ENCODE measurements at regions of chr1 and their contacts with region 1.

Region 1: DNA sequence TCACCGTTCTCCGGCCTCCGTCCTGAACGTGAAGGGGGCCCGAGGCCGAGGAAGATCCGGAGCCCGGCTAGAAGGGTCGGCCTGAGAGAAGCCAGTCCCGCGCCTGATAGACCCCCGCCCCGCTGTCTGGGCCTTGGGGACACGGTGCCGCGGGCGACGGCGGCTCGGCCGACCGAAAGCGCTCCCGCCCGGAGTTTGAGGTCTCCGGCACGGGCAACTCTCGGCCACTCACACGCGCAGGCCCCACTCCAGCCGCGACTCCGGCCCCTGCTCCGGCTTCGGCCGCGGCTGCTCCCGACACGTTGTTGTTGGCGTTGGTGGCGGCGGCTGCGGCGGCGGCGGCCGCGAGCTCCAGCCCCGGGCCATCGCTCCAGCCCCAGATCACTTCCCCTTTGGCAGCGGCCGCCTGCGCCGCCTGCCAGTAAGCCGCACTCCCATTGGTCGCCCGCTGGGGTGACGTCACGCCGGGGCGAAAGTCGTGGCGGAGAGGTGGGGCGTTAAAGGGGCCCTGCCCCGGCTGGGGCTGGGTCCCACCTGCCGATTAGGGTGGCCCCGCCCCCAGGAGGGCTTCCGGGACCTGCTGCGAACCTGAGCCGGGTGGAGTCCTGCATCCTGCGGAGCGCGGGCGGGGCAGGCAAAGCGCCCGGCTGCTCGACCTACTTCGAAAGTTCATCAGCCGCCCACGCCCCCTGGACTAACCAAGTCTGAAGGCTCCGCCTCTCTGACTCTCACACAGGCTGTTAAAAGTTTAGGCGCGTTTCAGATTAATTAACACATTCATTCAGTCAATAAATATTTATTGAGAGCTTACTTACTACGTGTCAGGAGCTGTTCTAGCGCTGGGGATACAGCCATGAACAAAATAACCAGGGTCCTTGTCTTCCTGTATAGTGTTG is at the start of gene EFCAB14:
- DNase-seq: peak; percentile 99
- H3K4me3 Mint-ChIP-seq: peak within 1 kb of the TSS; percentile 97
- H3K27ac Mint-ChIP-seq: peak within 1 kb of the TSS; percentile 94
- H3K4me1 Mint-ChIP-seq: peaks cover 41% of the 10 kb centered on the region
- H3K27me3 Mint-ChIP-seq: no peaks in the 10 kb centered on the region
- total RNA-seq, gene EFCAB14: 67.0 and 70.4 TPM in 2 replicates

Region 2: DNA sequence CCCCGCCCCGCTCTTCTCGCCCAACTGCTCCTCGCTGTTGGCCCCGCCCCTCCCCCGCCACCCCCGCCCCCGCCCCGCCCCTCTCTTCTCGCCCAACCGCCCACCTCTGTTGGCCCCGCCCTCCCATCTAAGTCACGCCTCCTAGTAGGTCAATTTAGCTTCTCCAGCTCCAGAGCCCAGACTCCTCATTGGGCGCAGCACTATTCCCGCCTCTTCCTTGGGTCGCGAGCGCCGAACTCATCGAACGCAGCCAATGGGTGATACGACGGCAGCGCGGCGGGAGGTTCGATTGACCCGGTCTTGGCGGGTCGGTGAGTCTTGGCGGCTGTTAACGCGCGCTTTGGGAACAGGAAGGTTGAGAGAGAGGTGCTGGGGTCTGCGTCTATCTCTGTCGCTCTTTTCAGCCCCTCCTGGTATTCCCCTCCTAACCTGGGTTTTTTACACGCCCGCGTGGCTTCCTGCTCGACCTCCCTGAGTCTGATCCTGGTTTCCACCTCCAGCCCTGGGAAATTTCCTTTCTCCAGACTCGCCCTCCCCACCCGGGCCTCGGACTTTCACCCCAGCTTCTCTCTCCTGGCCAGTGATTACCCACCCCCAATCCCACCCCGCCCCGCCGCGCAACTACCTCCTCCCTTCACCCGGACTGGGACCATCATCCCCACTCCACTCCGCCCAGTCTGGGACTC is 471.4 kb before region 1 on chr1 and contains the start of gene RAD54L:
- intact Hi-C with region 1: loop called (anchors 5 kb)
- DNase-seq: peak; percentile 95
- H3K4me3 Mint-ChIP-seq: peak within 1 kb of the TSS; percentile 97
- H3K27ac Mint-ChIP-seq: peak within 1 kb of the TSS; percentile 94
- H3K4me1 Mint-ChIP-seq: peaks cover 39% of the 10 kb centered on the region
- H3K27me3 Mint-ChIP-seq: no peaks in the 10 kb centered on the region
- total RNA-seq, gene RAD54L: 49.7 and 50.2 TPM in 2 replicates

Region 3: DNA sequence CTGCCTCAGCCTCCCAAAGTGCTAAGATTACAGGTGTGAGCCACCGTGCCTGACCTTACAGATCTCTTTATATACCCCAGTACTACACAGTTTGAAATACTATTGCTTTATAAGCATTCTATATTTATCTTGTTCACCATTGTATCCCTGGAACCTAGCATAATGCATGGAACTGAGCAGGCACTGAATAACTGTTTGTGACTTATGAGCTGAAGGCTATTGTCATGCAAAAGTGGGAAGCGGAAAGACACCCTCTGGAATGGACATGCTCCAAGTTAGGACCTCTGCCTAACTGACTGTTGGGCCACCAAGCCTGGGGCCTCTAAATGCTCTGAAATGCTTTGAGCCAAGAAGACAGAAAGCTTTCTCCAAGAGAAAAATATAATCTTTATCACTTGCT is 423.7 kb before region 1 on chr1:
- intact Hi-C with region 1: no loop called
- DNase-seq: no peak
- H3K4me3 Mint-ChIP-seq: no peak overlapping the region
- H3K27ac Mint-ChIP-seq: no peak overlapping the region
- H3K4me1 Mint-ChIP-seq: peaks cover 8% of the 10 kb centered on the region
- H3K27me3 Mint-ChIP-seq: no peaks in the 10 kb centered on the region

Region 4: DNA sequence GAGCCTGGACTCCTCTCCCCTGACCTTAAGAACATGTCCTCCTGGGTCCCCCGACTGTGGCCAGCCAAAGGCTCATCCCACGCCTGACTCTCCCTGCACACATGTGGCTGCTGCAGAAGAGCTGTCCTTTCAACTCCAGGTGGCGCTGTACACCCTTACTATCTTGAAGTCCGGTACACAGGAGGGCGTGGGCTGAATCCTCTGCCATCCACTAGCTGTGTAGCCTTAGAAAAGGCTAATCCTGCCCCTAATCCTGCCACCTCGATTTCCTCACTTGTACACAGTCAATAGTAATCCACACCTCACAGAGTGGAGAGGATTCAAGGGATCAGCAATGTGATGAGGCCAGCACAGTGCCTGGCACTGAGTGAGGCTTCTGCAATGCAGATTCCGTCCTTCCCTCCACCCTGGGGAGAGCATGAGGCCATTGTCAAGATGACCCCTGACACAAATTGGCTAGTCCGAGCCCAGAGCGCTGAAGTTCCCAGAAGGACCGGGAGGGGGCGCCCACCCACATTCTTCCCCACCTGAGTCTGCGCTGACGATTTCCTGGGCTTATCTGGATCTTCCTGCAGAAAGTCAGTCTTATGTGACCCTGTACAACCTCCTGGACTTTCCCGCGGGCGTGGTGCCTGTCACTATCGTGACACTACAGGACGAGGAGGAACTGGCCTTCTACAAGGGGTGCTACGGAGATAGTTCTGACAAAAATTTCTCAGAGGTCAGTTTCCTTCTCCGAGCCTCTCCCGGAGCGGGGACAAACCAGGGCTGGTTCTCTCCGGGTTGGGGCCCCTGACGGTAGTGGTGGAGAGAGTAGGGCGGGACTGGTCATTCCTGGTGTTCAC is 276.4 kb before region 1 on chr1:
- intact Hi-C with region 1: loop called (anchors 2 kb)
- DNase-seq: peak; percentile 56
- H3K4me3 Mint-ChIP-seq: peak overlapping the region; percentile 81
- H3K27ac Mint-ChIP-seq: peak overlapping the region; percentile 64
- H3K4me1 Mint-ChIP-seq: peaks cover 13% of the 10 kb centered on the region
- H3K27me3 Mint-ChIP-seq: peaks cover 38% of the 10 kb centered on the region

Region 5: GRCh38 chr1:46603858-46604549 is 115.0 kb before region 1 on chr1 and contains the start of gene MKNK1:
- intact Hi-C with region 1: loop called (anchors 1 kb)
- DNase-seq: peak; percentile 99
- H3K4me3 Mint-ChIP-seq: peak within 1 kb of the TSS; percentile 91
- H3K27ac Mint-ChIP-seq: peak within 1 kb of the TSS; percentile 88
- H3K4me1 Mint-ChIP-seq: peaks cover 67% of the 10 kb centered on the region
- H3K27me3 Mint-ChIP-seq: no peaks in the 10 kb centered on the region
- total RNA-seq, gene MKNK1: 48.7 TPM in 2 replicates

Region 6: GRCh38 chr1:46667782-46668760 is 50.9 kb before region 1 on chr1 and contains the start of gene ATPAF1:
- intact Hi-C with region 1: loop called (anchors 1 kb)
- DNase-seq: peak; percentile 62
- H3K4me3 Mint-ChIP-seq: peak within 1 kb of the TSS; percentile 85
- H3K27ac Mint-ChIP-seq: peak within 1 kb of the TSS; percentile 58
- H3K4me1 Mint-ChIP-seq: peaks cover 25% of the 10 kb centered on the region
- H3K27me3 Mint-ChIP-seq: no peaks in the 10 kb centered on the region
- total RNA-seq, gene ATPAF1: 40.9 and 46.3 TPM in 2 replicates

Region 7: GRCh38 chr1:47313915-47314664 is 595.1 kb after region 1 on chr1 and contains the start of gene STIL:
- intact Hi-C with region 1: loop called (anchors 1 kb)
- DNase-seq: peak; percentile 98
- H3K4me3 Mint-ChIP-seq: peak within 1 kb of the TSS; percentile 94
- H3K27ac Mint-ChIP-seq: peak within 1 kb of the TSS; percentile 85
- H3K4me1 Mint-ChIP-seq: peaks cover 27% of the 10 kb centered on the region
- H3K27me3 Mint-ChIP-seq: peaks cover 3% of the 10 kb centered on the region
- total RNA-seq, gene STIL: 25.8 and 26.3 TPM in 2 replicates